Aorta (tissue), 5 donors: ENCODE measurements at regions of chr10 and their contacts with region 1.

Region 1: DNA sequence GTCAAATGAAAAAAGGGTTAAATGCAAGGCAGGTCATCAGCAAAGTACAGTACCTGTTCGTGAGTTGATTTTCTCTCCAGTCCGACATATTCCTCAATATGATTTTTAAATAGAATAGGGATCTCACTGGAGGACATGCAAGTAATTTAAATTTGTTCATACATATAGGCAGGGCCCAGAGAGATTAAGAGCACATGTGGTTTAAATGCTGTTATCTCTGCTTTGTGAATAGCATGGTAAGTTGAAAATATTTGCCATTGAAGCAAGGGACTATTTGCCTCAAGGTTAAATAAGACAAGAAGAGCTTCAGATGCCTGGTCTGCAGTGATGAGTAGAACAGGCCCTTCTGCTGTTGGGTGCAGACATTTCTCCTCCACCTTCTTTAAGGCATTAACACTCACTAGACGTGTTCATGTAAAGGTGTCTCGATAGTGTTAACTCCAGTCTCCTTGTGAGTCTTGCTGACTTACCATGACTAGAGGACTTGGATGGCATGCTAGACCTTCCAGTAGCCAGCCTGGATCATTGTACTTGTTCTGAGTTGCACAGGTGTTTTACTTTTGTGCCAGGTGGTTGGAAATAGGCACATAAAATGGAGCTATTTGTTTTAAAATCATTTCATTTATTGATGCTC is 15.6 kb upstream of the AKR1C3 start:
- DNase-seq: no peak
- ATAC-seq: no peak
- H3K4me3 ChIP-seq: no peak overlapping the region
- H3K27ac ChIP-seq: no peak overlapping the region
- H3K4me1 ChIP-seq: peaks cover 0 to 7% of the 10 kb centered on the region in 2 donors
- H3K27me3 ChIP-seq: no peaks in the 10 kb centered on the region

Region 2: DNA sequence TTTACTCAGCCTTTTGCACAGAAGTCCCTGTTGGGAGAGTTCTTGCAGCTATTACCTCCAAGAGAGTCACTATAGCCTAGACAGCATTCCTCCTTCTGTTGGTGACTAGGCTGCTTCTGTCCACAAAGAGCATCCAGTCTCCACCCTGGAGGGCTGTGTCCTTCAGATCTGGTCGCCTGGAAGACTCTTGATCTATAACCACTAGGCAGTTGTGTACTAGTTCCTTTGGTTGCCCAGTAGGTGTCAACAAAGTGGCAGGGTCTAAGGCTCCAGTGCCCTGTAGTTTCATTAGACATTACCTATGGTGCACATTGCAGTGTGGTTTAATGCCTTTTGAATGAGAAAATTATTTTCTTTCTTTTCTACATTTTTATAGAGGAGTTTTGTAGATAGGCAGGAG is 63.7 kb before region 1 on chr10:
- intact Hi-C with region 1: loop called (anchors 5 kb)
- DNase-seq: no peak
- ATAC-seq: no peak
- H3K4me3 ChIP-seq: no peak overlapping the region
- H3K27ac ChIP-seq: no peak overlapping the region
- H3K4me1 ChIP-seq: peaks cover 0 to 3% of the 10 kb centered on the region in 2 donors
- H3K27me3 ChIP-seq: no peaks in the 10 kb centered on the region

Region 3: GRCh38 chr10:5043716-5044115 is 34.9 kb before region 1 on chr10:
- intact Hi-C with region 1: no loop called
- DNase-seq: no peak
- ATAC-seq: no peak
- H3K4me3 ChIP-seq: no peak overlapping the region
- H3K27ac ChIP-seq: no peak overlapping the region
- H3K4me1 ChIP-seq: peaks cover 0 to 5% of the 10 kb centered on the region in 2 donors
- H3K27me3 ChIP-seq: no peaks in the 10 kb centered on the region